CD4-positive, alpha-beta memory T cell (primary cell): ENCODE measurements at regions of chr1 and their contacts with region 1.

Region 1: GRCh38 chr1:180252638-180253536 is 22.8 kb downstream of the LHX4 start:
- DNase-seq: peak; percentile 38 to 62 (median 56)
- H3K4me3 ChIP-seq: no peak overlapping the region
- H3K4me3 Mint-ChIP-seq: no peak overlapping the region
- H3K27ac ChIP-seq: no peak overlapping the region
- H3K27ac Mint-ChIP-seq: no peak overlapping the region
- H3K4me1 ChIP-seq: no peaks in the 10 kb centered on the region
- H3K4me1 Mint-ChIP-seq: peaks cover 0 to 4% (median 3%) of the 10 kb centered on the region in 4 donors
- H3K27me3 ChIP-seq: peaks cover 5% of the 10 kb centered on the region
- H3K27me3 Mint-ChIP-seq: peaks cover 37 to 48% of the 10 kb centered on the region in 2 donors

Region 2: DNA sequence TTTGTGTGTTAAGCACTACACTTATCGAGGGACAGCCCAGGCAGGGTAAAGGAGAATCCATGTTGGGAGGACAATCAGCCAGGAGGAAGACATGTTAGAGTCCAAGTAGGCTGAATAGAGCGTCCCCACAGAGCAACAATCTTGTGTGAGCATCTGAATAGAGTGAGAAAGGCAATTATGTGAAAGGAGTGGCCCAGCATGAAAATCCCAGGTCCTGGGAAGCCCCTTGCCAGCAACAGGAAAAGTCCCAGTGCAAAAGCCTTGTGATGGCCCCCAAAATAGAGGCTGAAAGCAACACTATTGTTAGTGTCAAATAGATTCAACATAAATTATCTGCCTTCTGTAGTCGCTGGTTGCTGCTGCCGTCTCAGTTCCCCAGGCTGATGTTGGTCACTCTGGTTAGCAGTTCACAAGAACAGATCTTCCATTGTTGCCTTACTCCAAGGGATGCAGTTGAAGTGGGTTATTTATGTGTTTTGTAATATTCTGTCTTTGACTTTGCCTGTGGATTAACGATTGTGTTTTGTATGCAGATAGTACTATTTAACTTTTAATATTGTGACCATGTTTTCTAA is 1011.3 kb before region 1 on chr1:
- CTCF ChIA-PET with region 1: no interaction called
- POLR2A ChIA-PET with region 1: no interaction called
- intact Hi-C with region 1: no loop called
- DNase-seq: no peak
- H3K4me3 ChIP-seq: no peak overlapping the region
- H3K4me3 Mint-ChIP-seq: no peak overlapping the region
- H3K27ac ChIP-seq: no peak overlapping the region
- H3K27ac Mint-ChIP-seq: no peak overlapping the region
- H3K4me1 ChIP-seq: no peaks in the 10 kb centered on the region
- H3K4me1 Mint-ChIP-seq: no peaks in the 10 kb centered on the region
- H3K27me3 ChIP-seq: no peaks in the 10 kb centered on the region
- H3K27me3 Mint-ChIP-seq: peaks cover 1 to 2% of the 10 kb centered on the region in 2 donors

Region 3: DNA sequence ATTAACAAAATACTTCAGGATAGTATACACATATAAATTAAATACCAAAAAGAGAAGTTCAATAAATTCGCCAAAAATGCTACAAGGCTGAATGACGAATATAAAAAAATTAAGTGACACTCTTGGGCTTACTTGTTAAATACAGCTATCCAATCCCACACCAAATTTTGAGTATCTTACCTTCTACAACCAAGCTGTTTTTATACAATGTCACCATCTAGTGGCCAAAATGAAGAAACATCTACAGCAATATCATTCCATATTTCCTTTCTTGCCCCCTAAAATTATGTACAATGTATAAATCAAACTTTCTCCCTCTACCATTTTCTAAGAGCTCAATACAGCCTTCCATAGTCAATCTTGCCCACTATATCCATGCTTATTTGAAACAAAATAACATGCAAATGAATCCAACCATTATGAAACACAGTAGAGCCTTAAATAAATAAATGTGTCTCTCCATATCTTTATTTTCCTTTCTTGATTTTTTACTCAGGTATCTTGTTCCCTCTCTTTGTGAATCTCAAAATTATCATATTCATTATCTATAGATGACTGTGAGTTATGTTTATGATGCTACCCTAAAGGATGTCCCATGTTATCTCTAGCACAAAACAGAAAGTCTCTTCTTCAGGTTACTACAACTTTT is 163.2 kb after region 1 on chr1:
- CTCF ChIA-PET with region 1: interaction called, 12 read pairs
- POLR2A ChIA-PET with region 1: no interaction called
- intact Hi-C with region 1: loop called (anchors 1 kb)
- DNase-seq: peak in 3 of 5 donors; percentile 3 to 11 (median 10)
- H3K4me3 ChIP-seq: no peak overlapping the region
- H3K4me3 Mint-ChIP-seq: no peak overlapping the region
- H3K27ac ChIP-seq: no peak overlapping the region
- H3K27ac Mint-ChIP-seq: no peak overlapping the region
- H3K4me1 ChIP-seq: no peaks in the 10 kb centered on the region
- H3K4me1 Mint-ChIP-seq: peaks cover 0 to 3% (median 1%) of the 10 kb centered on the region in 4 donors
- H3K27me3 ChIP-seq: no peaks in the 10 kb centered on the region
- H3K27me3 Mint-ChIP-seq: no peaks in the 10 kb centered on the region

Region 4: DNA sequence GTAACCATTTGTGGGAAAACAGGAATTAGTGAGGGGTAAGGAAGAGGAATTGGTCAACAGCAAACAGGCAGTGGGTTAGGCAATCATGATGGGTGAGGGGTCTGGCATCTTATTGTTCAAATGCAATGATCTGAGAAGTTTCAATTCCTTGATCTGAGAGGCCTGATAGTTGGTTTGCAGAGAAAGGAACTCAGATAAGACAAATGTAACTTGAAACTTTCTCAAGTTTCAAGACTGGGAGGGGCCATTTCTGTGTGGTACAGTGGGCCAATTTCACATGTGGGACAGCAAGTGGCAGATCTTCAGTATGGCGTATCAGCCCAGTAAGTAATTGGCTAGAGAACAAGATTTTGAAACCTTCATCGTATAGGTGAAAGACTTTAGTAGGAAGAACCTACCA is 481.5 kb after region 1 on chr1:
- CTCF ChIA-PET with region 1: no interaction called
- POLR2A ChIA-PET with region 1: no interaction called
- intact Hi-C with region 1: no loop called
- DNase-seq: no peak
- H3K4me3 ChIP-seq: no peak overlapping the region
- H3K4me3 Mint-ChIP-seq: peak overlapping the region in 1 of 8 donors; percentile 53
- H3K27ac ChIP-seq: no peak overlapping the region
- H3K27ac Mint-ChIP-seq: no peak overlapping the region
- H3K4me1 ChIP-seq: no peaks in the 10 kb centered on the region
- H3K4me1 Mint-ChIP-seq: peaks cover 0 to 6% (median 0%) of the 10 kb centered on the region in 4 donors
- H3K27me3 ChIP-seq: no peaks in the 10 kb centered on the region
- H3K27me3 Mint-ChIP-seq: no peaks in the 10 kb centered on the region